MCF 10A (cell line): ENCODE measurements at regions of chr4 and their contacts with region 1.

Region 1: GRCh38 chr4:182938205-182938645 is 21.0 kb upstream of the DCTD start:
- DNase-seq: peak; percentile 77
- H3K4me3 Mint-ChIP-seq: no peak overlapping the region
- H3K27ac Mint-ChIP-seq: no peak overlapping the region
- H3K4me1 Mint-ChIP-seq: peaks cover 17% of the 10 kb centered on the region
- H3K27me3 Mint-ChIP-seq: peaks cover 19% of the 10 kb centered on the region
- CTCF ChIP-seq: peak; percentile 95

Region 2: DNA sequence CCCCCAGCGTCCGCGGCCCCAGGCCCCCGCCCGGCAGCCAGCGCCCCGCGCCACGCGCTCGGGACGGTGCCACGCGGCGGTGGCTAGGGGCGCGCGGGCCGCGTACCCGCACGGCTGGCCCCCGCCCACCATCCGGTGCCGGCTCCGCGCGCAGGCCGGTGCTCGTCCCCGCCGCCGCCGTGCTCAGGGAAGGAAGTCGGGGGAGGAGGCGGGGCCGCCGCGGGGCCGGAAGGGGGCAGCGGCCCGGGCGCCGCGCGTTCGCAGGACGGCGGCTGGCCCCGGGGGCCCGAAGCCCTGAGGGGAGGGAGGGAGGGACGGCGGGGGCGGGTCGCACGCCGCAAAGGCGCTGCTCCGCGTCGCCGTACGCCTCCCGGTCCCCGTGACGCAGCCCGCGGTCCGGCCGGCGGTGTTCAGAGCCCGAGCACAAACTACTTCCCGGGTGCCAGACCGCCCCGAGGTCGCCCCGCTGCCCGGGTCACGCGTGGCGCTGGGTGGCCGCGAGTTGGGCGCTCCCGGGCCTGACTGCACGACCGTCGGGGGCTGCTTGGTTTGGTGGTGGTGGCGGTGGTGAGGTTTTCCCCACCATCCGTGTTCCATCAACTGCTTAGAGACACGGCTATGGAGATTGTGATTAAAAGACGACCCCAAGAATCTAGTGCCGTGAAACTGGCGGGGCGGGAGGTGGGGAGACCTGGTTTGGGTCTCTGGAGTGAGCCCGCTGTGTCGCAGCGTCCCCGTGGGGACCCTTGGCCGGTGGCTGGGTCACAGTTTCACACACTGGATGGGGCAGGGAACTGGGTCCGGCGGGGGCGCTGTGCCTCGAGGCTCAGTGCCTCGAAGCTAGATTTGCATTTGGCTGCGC is 20.8 kb before region 1 on chr4 and contains the start of gene DCTD:
- CTCF ChIA-PET with region 1: interaction called, 55 read pairs
- POLR2A ChIA-PET with region 1: no interaction called
- intact Hi-C with region 1: no loop called
- DNase-seq: peak; percentile 63
- H3K4me3 Mint-ChIP-seq: peak within 1 kb of the TSS; percentile 74
- H3K27ac Mint-ChIP-seq: peak within 1 kb of the TSS; percentile 84
- H3K4me1 Mint-ChIP-seq: peaks cover 13% of the 10 kb centered on the region
- H3K27me3 Mint-ChIP-seq: no peaks in the 10 kb centered on the region
- CTCF ChIP-seq: peak; percentile 27
- total RNA-seq, gene DCTD: 168 and 180 TPM in 2 replicates

Region 3: DNA sequence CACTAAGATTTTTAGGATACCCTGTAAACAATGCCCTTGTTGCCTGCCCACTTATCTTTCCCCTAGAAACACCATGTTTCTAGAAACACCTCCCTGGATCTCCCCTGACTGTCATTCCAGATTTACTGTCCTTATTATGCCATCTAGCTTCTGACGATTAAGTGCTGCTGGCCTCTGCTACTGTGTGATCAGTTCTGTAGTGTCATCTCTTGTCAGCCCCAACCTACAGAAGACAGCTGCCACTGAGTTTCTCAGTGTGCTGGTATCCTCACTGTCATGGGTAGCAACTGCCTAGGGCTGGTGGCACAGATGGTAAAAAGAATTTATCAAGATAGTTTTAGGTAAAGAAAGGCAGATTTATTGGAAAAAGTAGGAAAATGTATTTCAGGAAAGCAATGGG is 92.1 kb after region 1 on chr4:
- CTCF ChIA-PET with region 1: interaction called, 10 read pairs
- POLR2A ChIA-PET with region 1: no interaction called
- intact Hi-C with region 1: no loop called
- DNase-seq: no peak
- H3K4me3 Mint-ChIP-seq: no peak overlapping the region
- H3K27ac Mint-ChIP-seq: no peak overlapping the region
- H3K4me1 Mint-ChIP-seq: no peaks in the 10 kb centered on the region
- H3K27me3 Mint-ChIP-seq: no peaks in the 10 kb centered on the region
- CTCF ChIP-seq: no peak

Region 4: DNA sequence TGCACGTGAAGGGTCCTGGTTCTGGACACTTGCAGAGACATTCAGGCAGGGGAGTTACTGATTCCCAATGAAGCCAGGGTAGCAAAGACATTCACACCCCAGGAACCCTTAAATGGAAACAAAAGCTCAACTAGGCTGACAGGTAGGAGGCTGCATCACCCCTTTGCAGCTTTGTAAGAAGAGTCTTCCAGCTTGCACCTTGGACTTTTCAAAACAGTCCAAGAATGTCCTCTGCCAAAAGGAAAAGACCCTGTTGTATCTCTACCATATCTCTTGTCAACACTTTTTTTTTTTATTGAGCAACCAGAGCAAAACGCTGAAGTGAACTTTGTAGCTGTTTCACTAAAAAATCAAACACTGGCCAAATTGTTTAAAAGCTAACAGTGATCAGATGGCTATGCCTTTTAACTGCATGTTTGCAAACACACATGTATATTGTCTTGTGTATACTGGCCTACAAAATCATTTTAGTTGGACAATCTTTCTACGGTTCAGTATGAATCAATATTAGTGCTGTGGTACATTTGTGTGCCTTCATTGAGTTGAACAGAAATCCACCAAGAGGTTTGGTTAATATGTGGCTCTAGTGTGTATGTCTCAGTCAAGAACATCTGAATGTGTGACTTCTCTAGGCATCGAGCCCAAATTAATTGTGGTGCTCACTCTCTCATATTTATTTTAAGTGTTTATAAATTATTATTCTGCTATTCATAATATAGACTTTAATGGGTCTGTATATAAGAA is 142.3 kb after region 1 on chr4:
- CTCF ChIA-PET with region 1: interaction called, 88 read pairs
- POLR2A ChIA-PET with region 1: no interaction called
- intact Hi-C with region 1: no loop called
- DNase-seq: no peak
- H3K4me3 Mint-ChIP-seq: no peak overlapping the region
- H3K27ac Mint-ChIP-seq: no peak overlapping the region
- H3K4me1 Mint-ChIP-seq: no peaks in the 10 kb centered on the region
- H3K27me3 Mint-ChIP-seq: no peaks in the 10 kb centered on the region
- CTCF ChIP-seq: no peak

Region 5: DNA sequence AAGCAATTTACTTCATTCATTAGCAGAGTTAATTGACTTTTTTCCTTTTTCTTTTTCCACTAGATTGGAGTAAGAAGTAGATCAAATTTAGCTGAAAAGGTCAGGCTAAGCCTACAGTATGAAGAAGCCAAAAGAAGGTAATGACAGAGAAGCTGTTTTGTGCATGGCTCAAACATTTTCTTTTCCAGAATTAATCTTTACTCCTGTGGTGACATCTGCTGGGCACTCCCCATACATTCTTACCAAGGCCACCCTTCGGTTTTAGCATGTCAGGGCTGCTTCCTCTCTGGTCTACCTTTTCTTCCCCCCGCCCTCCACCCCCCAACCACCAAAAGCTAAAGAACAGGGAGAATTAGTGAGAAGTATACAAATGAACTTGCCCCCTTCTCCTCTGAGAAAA is 311.6 kb after region 1 on chr4:
- CTCF ChIA-PET with region 1: interaction called, 258 read pairs
- POLR2A ChIA-PET with region 1: interaction called, 6 read pairs
- intact Hi-C with region 1: loop called (anchors 1 kb)
- DNase-seq: peak; percentile 54
- H3K4me3 Mint-ChIP-seq: no peak overlapping the region
- H3K27ac Mint-ChIP-seq: no peak overlapping the region
- H3K4me1 Mint-ChIP-seq: no peaks in the 10 kb centered on the region
- H3K27me3 Mint-ChIP-seq: no peaks in the 10 kb centered on the region
- CTCF ChIP-seq: peak; percentile 43

Region 6: DNA sequence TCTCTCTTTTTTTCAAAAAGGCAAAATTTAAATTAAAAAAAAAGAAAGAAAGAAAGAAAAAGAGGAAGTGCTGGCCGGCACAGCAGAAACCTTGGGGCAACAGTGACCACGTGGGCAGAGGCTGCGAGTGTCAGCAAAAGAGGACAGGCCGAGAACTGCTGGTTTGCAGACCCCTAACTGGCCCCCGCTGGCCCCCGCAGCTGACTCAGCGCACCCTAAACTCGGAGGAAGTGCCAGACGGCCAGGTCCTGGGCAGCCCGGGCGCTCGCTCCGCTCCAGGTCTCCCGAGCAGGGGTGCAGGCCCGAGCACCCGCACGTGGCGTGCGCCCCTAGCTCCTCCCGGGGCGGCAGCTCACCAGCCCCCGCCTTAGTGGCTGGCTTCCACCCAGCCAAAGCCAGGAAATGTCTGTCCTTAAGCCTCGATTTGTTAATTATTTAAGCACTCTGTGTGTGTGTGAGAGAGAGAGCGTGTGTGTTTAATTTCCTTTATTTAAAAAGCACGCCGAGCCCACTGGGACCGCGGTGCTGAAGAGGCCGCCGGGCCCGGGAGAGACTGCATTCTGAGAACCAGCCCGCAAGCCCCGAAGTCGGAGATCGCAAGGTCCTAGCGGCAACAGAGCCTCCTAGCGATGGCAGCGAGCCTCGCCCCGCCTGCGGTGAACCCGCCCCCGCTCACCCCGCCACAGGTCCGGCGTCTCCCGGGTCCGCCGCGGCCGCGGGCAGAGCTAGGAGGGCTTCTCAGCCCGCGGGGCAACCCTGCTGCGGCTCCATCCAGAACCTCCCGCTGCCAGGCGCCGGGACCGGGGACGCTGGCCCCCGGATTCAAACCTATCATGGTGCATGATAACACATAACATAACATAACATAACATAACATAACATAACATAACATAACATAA is 460.3 kb after region 1 on chr4:
- CTCF ChIA-PET with region 1: interaction called, 5 read pairs
- POLR2A ChIA-PET with region 1: no interaction called
- intact Hi-C with region 1: loop called (anchors 2 kb)
- DNase-seq: peak; percentile 56
- H3K4me3 Mint-ChIP-seq: peak overlapping the region; percentile 74
- H3K27ac Mint-ChIP-seq: peak overlapping the region; percentile 80
- H3K4me1 Mint-ChIP-seq: peaks cover 10% of the 10 kb centered on the region
- H3K27me3 Mint-ChIP-seq: no peaks in the 10 kb centered on the region
- CTCF ChIP-seq: peak; percentile 49